Panc1 (cell line): ENCODE measurements at regions of chr6 and their contacts with region 1.

Region 1: GRCh38 chr6:89145787-89146646 is at the start of gene PM20D2:
- DNase-seq: no peak
- ATAC-seq: peak; percentile 97
- H3K4me3 ChIP-seq: peak within 1 kb of the TSS; percentile 72 to 73
- H3K27ac ChIP-seq: peak within 1 kb of the TSS; percentile 80
- H3K4me1 ChIP-seq: peaks cover 12% of the 10 kb centered on the region
- H3K27me3 ChIP-seq: no peaks in the 10 kb centered on the region
- CTCF ChIP-seq: no peak
- total RNA-seq, gene PM20D2: 13.6 TPM

Region 2: DNA sequence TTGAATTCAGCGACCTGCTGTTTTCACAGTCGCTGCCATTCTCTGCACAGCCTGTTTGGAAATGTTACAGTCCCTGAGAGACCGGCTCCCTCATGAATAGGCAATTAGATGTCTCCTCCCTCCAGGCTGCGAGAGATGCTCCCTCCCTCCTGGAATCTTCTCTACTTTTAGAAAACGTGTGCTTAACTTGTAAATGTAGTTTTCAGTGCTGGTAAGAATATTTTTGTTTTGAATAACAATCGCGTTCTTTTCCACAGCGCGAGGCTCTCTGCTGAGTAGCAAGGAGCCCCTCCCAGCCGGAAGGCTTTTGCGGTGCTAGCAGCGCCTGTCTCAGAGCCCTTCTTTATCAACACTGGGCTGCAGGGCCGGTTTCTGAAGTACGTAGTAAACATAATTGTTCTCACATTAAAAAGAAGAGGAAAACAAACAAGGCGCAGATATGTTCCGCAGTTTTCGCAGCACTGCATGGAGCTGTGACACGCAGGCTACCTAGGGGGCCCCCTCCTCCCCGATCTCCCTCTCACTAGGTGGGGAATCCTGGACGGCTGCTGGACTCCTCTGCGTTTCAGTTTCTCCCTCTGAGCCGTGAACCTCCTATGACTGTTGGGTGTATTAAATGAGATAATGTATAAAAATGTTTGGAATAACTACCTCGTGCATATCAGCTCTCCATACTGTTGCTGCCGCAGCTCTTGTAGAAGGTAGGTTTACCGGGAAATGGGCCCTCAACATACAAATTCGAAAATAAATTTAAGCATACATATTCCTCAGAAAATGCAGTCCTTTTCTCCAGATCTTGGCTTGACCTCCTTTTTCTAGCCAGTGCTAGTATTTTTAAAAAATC is 1177.4 kb before region 1 on chr6:
- CTCF ChIA-PET with region 1: no interaction called
- POLR2A ChIA-PET with region 1: no interaction called
- in situ Hi-C with region 1: no loop called
- intact Hi-C with region 1: no loop called
- DNase-seq: no peak
- ATAC-seq: peak; percentile 71; the same call in 1 of the 2 replicates
- H3K4me3 ChIP-seq: peak overlapping the region; percentile 15 to 35
- H3K27ac ChIP-seq: no peak overlapping the region
- H3K4me1 ChIP-seq: no peaks in the 10 kb centered on the region
- H3K27me3 ChIP-seq: peaks cover 32% of the 10 kb centered on the region
- CTCF ChIP-seq: no peak

Region 3: DNA sequence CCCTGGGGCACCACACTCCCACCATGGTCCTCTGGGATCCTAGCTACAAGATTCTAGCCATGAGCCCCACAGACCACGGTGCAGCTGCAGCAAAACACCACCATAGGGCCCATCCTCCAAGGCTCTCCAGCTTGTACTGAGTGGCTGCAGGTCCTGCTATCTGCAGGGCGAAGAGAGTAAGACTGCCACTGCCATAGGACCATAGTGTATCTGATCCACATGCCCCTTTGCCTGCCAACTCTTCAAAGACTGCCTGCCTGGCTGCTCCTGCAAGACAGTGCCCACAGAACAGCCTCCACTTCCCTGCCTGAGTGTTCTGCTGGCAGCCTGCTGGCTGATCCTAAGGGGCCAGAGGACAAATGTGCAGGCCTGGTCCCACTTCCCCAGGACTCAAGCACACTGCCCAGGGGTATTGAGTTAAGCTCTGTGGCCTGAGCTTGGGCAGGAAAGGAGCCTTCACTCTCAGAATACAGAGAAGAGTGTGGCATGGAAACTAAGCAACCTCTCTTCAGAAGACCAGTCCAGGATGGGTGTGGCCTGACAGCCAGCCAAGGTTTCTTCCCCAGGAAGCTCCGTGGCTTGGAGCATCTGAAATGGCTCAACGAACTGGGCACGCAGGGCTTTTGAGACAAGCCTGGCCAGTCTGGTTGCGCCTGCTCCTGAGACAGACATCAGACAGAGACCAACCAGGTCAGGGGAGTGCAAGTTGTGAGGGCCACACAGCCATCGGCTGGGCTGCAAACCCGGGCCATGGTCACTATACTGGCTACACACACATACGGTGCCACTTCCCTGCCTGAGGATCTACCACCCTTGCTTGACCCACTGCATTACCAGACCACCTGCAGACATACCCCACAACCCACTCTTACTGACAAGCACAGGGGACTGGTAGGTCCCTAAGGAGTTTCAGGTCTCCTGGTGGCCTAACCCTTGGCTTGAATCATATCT is 237.1 kb before region 1 on chr6:
- CTCF ChIA-PET with region 1: no interaction called
- POLR2A ChIA-PET with region 1: no interaction called
- in situ Hi-C with region 1: no loop called
- intact Hi-C with region 1: no loop called
- DNase-seq: no peak
- ATAC-seq: no peak
- H3K4me3 ChIP-seq: no peak overlapping the region
- H3K27ac ChIP-seq: no peak overlapping the region
- H3K4me1 ChIP-seq: no peaks in the 10 kb centered on the region
- H3K27me3 ChIP-seq: no peaks in the 10 kb centered on the region
- CTCF ChIP-seq: no peak

Region 4: GRCh38 chr6:89117211-89118108 is 28.6 kb before region 1 on chr6 and contains the start of gene SRSF12:
- CTCF ChIA-PET with region 1: no interaction called
- POLR2A ChIA-PET with region 1: interaction called, 12 read pairs
- in situ Hi-C with region 1: no loop called
- intact Hi-C with region 1: no loop called
- DNase-seq: no peak
- ATAC-seq: peak; percentile 86
- H3K4me3 ChIP-seq: peak within 1 kb of the TSS; percentile 48 to 54
- H3K27ac ChIP-seq: no peak within 1 kb of the TSS
- H3K4me1 ChIP-seq: peaks cover 5% of the 10 kb centered on the region; the same call in 1 of the 2 replicates
- H3K27me3 ChIP-seq: peaks cover 6% of the 10 kb centered on the region; the same call in 1 of the 2 replicates
- CTCF ChIP-seq: no peak
- total RNA-seq, gene SRSF12: 0.28 TPM

Region 5: GRCh38 chr6:89829591-89830385 is 683.8 kb after region 1 on chr6 and contains the start of gene CASP8AP2:
- CTCF ChIA-PET with region 1: no interaction called
- POLR2A ChIA-PET with region 1: no interaction called
- in situ Hi-C with region 1: no loop called
- intact Hi-C with region 1: no loop called
- DNase-seq: peak; percentile 97
- ATAC-seq: peak; percentile 99
- H3K4me3 ChIP-seq: peak within 1 kb of the TSS; percentile 81 to 97
- H3K27ac ChIP-seq: peak within 1 kb of the TSS; percentile 91
- H3K4me1 ChIP-seq: peaks cover 5% of the 10 kb centered on the region
- H3K27me3 ChIP-seq: no peaks in the 10 kb centered on the region
- CTCF ChIP-seq: no peak
- total RNA-seq, gene CASP8AP2: 22.9 TPM